ENCODE measurements at regions of chr4 and their contacts with region 1.

Region 1: GRCh38 chr4:55008166-55009070 is 117.0 kb downstream of the KDR start:
- ATAC-seq: peak in 3 of 8 experiments; percentile 22 to 53 (median 30)
- H3K4me3 ChIP-seq: no peak overlapping the region
- H3K27ac ChIP-seq: no peak overlapping the region
- H3K4me1 ChIP-seq: peaks cover 2% of the 10 kb centered on the region in 2 donors

Region 2: DNA sequence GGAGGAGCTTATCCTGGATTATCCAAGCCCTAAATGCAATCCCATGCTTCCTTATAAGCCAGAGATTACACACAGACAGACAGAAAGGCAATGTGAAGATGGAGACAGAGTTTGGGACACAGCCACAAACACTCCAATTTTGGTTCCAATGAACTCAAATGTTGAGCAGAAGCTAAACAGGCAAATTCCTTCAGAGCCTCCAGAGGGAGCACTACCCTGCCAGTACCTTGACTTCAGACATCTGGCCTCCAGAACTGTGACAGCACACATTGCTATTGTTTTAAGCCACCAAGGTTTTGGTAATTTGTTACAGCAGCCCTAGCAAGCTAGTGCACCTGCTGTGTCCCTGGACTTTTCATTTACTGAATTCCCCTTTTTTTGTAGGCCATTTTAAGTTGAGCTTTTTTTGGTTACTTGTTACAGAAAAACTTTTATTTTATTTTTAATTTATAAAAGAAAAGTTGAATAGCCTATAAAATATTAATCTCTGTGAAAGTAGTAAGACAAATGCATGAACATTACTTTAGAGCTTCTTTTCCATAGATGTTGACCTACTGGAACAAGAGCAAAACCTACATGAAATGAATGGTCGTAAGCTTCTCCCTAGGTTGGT is 304.2 kb after region 1 on chr4:
- in situ Hi-C with region 1: loop called in 1 of 9 experiments (anchors 25 kb)
- ATAC-seq: peak in 3 of 8 experiments; percentile 79 to 87 (median 87)
- H3K4me3 ChIP-seq: no peak overlapping the region
- H3K27ac ChIP-seq: no peak overlapping the region
- H3K4me1 ChIP-seq: no peaks in the 10 kb centered on the region

Region 3: GRCh38 chr4:55345980-55346850 is 337.8 kb after region 1 on chr4 and contains the start of gene SRD5A3:
- in situ Hi-C with region 1: loop called in 1 of 9 experiments (anchors 25 kb)
- ATAC-seq: peak; percentile 92 to 95 (median 93)
- H3K4me3 ChIP-seq: peak within 1 kb of the TSS; percentile 48 to 80 (median 69)
- H3K27ac ChIP-seq: peak within 1 kb of the TSS; percentile 82 to 93
- H3K4me1 ChIP-seq: peaks cover 10 to 11% of the 10 kb centered on the region in 2 donors
- total RNA-seq, gene SRD5A3: 5.7 to 19.9 (median 9.0) TPM

Region 4: GRCh38 chr4:56086073-56086521 is 1077.7 kb after region 1 on chr4:
- in situ Hi-C with region 1: no loop called
- ATAC-seq: peak in 6 of 8 experiments; percentile 21 to 89 (median 80)
- H3K4me3 ChIP-seq: no peak overlapping the region
- H3K27ac ChIP-seq: peak overlapping the region in 1 of 2 donors; percentile 5
- H3K4me1 ChIP-seq: peaks cover 21% of the 10 kb centered on the region in 2 donors

Measured in motor neuron (in vitro differentiated cells).